GM18951 (cell line): ENCODE measurements at regions of chr4 and their contacts with region 1.

Region 1: DNA sequence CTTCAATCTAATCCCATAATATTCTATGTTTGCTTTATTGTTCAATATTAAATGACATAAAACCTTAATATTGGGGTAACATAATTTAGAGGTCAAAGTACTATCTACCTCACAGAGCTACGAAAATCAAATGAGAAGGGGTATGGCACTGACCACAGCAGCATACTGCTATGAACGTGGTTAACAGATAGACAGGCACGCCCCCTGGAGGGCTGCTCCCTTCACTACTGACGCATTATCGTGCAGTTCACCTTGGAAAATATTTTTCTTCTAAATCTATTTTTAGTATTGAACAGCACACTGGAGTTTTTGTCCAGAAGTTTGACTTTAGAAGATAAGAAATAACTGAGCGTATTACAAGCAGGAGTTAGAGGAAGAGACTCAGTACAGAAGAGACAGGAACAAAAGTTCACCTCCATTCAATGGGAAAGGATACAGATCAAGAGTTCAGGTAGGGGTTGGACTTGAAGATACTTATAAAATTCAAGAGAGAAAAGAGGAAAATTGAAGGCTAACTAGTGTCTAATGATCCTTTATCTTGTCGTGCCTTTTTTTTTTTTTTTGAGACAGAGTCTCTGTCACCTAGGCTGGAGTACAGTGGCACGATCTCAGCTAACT is 22.7 kb downstream of the MAP9 start:
- POLR2A ChIP-seq: no peak

Region 2: GRCh38 chr4:154807042-154807630 is 546.9 kb before region 1 on chr4:
- in situ Hi-C with region 1: loop called (anchors 25 kb)
- POLR2A ChIP-seq: no peak

Region 3: DNA sequence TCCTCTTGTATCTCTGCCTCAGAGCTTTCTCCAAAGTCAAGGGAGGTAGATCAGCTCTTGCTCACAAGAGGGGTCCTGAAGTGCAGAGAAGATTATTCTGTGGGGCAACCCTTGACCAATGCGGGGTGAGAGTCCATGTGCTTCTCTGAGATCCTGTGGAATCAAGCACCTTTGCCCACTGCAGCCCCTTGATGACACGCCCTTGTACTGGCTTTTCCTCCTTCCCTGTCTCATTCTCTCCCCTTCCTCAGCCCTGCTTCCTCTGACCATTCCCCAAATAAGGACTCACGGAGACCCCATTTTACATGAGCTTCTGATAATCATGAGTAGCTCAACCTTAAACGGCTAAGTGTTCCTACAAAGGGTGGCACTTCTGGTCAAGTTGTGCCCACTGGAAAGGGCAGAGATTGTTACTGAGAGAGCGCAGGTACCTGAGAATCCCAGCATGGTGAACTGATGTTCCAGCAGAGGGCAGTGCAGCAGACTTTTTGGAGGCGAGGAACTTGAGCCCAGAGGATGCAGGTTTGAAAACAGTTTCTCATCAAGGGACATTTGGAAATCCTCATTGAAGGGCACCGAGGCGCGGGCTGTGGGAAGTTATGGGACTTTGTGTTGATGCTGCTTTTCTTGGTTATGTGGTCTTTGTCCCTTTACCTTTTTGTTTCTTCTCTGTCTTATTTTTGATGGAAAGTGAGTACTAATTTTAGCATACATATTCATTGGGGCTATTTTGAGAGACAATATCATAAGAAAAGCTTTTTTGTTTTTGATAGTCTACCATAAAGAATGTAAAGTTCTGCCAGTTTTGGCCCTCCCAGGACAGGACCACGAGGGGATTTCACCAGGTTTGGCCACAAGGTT is 371.6 kb before region 1 on chr4:
- in situ Hi-C with region 1: loop called (anchors 25 kb)
- POLR2A ChIP-seq: no peak

Region 4: DNA sequence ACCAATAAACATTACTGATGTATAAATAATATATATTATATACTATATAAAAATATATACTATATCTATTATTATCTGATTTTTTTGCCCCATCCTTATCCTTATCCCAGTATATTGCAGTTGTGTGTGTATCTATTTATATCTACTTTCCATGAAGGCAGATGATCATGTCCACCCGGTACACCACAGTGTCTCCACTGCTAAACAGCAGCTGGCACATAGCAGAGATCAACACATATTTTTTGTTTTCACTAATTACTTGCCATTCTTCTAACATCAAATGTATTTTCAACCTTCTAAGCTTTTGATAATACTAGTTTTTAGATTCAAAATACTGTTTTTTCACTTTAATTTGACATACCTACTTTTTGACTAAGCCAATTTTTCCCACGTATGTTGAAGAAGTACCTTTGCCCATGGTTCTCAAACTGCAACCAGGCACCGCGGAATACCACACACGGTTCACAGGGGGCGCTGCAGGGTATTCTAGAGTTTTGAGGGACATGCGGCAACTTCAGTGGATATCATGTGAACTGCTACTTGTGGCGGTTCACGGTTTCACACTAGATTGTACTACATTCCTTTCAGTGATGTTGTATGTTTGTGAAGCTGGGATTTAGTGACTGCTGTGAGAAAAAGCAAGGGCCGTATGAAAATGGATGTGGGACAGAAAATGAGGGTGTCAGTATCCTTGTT is 328.1 kb before region 1 on chr4:
- in situ Hi-C with region 1: no loop called
- POLR2A ChIP-seq: no peak